ENCODE measurements at regions of chr5 and their contacts with region 1.

Region 1: DNA sequence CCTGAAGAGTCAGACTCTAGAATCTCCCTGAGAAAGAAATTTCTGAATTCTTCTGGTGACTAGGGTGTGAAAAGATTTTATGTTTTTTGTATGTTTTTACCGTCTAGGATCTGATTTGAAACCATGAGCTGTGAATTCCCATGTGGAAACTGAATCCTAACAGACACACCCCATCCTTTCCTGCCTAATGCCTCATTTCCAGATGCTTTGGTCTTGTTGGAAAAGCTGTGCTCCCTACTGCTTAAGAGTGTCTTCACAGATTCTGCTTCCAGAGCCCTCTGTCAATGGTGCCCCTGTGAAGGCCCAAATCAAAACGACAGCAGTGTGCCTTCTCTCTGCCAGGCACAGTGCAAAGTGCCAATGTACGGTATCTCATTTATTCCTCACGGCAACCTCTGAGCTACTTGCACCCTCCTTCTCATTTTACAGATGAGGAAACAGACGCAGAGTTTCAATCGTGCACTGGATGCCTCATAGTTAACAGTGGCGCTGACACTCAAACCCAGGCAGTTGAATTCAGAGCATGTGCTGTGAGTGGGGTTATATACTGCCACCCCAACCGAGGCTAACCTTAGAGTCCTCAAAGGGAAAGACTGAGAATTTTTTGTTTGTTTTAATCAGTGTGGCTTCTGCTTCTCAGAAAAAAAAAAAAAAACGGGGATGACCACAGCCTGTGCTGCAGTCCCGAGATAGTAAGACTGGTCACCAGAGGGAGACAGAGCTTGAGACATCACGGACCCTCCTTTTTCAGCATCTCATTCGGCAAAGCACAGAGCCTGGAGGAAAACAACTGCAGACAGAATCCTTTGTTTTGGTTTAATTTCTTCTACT is 188.4 kb downstream of the SNCAIP start:
- DNase-seq: peak; percentile 29
- CTCF ChIP-seq: peak; percentile 35

Region 2: GRCh38 chr5:122192497-122193496 is 307.7 kb before region 1 on chr5:
- in situ Hi-C with region 1: loop called (anchors 10 kb)
- DNase-seq: peak; percentile 29
- CTCF ChIP-seq: peak; percentile 66

Region 3: GRCh38 chr5:122999945-123000563 is 499.6 kb after region 1 on chr5:
- in situ Hi-C with region 1: loop called (anchors 10 kb)
- DNase-seq: peak; percentile 81
- CTCF ChIP-seq: peak; percentile 63